IMR-90 (cell line): ENCODE measurements at regions of chr20 and their contacts with region 1.

Region 1: DNA sequence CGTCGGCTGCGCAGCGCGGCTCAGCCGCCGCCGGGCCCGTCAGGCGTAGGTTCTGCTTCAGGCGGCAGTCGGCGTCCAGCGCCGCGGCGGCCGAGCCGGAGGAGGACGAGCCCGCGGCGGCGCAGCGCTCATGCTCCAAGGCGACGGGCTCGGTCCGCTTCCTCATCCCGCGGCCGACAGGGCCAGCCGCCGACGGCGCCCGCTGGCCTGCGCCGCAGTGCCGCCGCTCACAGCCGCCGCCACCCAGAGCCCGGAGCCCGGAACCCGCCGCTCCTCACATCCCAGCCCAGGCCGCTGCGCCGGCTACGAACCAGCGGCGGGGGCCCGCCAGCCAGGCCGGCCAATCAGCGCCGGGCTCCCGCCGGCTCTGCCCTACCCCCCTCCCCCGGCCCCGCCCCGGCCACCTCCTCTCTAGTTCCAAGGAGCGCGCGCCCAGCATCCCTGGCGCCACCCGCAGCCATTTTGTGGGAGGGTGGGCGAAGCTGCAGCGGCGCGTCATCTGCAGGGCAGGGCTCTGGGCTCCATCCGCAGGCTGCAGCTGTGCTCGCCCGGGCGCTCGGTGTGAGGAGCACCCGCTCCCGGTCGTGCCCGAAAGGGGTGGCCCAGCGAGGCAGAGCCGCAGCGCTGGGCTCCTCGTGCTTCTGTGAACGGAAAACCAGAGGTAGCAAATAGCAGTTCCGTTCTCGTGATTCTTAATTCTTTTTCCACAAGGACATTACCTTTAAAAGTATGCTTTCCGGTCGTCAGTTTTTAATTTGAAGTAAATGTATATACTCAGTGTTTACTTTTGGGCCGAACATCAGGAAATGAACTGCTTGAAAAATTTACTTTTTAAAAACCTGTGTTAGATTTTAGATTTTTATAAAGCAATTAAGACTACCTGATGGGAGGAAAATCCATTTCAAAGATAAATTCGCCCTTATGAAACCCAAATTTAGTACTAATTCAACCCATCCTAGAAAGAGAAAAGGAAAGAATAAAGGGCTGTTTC is at the start of gene ABHD12:
- DNase-seq: peak; percentile 95
- ATAC-seq: peak; percentile 96
- H3K4me3 ChIP-seq: peak within 1 kb of the TSS; percentile 98
- H3K27ac ChIP-seq: peak within 1 kb of the TSS; percentile 96
- H3K4me1 ChIP-seq: no peaks in the 10 kb centered on the region; the same call in 1 of the 2 replicates
- H3K27me3 ChIP-seq: no peaks in the 10 kb centered on the region
- CTCF ChIP-seq: no peak
- POLR2A ChIP-seq: peak; percentile 96
- RAD21 ChIP-seq: peak; percentile 25
- total RNA-seq, gene ABHD12: 64.2 and 80.7 TPM in 2 replicates

Region 2: GRCh38 chr20:24634855-24635254 is 756.0 kb before region 1 on chr20:
- CTCF ChIA-PET with region 1: no interaction called
- POLR2A ChIA-PET with region 1: no interaction called
- dilution Hi-C with region 1: no loop called
- in situ Hi-C with region 1: loop called (anchors 25 kb)
- intact Hi-C with region 1: no loop called
- DNase-seq: peak; percentile 94
- ATAC-seq: peak; percentile 97
- H3K4me3 ChIP-seq: no peak overlapping the region
- H3K27ac ChIP-seq: peak overlapping the region; percentile 66
- H3K4me1 ChIP-seq: peaks cover 9% of the 10 kb centered on the region
- H3K27me3 ChIP-seq: peaks cover 7% of the 10 kb centered on the region
- CTCF ChIP-seq: no peak
- POLR2A ChIP-seq: no peak
- RAD21 ChIP-seq: peak; percentile 30; the same call in 1 of the 2 replicates

Region 3: DNA sequence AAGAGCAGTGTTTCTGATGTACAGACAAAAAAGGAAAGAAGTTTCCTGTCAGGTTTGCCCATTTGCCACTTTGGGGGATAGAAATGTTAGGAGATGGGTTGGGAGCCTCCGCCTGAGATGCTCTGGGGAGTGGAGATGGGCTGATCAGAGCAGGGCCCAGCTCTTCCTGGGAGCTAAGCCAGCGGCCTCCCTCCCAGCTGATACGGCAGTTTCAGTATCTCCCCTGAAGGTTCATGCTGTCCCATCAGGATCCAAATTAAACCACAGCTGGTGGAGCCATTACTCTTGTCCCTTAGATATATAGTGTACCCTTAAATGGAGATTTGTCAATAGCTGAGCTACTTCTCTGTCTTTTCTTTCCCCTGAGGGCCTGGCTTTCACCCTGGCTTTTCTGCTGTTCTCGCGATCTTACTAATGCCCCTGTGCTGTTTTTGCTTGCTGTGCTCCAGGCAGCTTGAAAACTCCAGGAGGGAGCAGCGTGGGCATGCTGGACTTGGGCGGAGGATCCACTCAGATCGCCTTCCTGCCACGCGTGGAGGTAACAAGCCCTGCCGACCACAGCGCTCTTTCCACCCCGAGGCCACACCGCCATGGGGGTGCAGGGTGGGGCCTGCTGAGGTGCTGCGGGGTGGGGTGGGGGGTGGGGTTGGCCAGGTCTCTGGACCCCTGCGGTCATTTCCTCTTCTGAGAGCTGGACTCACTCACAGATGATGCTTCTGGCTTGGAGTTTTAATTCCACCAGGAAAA is 174.5 kb before region 1 on chr20:
- CTCF ChIA-PET with region 1: interaction called, 4 read pairs
- POLR2A ChIA-PET with region 1: no interaction called
- dilution Hi-C with region 1: no loop called
- in situ Hi-C with region 1: loop called (anchors 10 kb)
- intact Hi-C with region 1: no loop called
- DNase-seq: no peak
- ATAC-seq: no peak
- H3K4me3 ChIP-seq: no peak overlapping the region
- H3K27ac ChIP-seq: no peak overlapping the region
- H3K4me1 ChIP-seq: no peaks in the 10 kb centered on the region
- H3K27me3 ChIP-seq: no peaks in the 10 kb centered on the region
- CTCF ChIP-seq: no peak
- POLR2A ChIP-seq: no peak
- RAD21 ChIP-seq: no peak

Region 4: DNA sequence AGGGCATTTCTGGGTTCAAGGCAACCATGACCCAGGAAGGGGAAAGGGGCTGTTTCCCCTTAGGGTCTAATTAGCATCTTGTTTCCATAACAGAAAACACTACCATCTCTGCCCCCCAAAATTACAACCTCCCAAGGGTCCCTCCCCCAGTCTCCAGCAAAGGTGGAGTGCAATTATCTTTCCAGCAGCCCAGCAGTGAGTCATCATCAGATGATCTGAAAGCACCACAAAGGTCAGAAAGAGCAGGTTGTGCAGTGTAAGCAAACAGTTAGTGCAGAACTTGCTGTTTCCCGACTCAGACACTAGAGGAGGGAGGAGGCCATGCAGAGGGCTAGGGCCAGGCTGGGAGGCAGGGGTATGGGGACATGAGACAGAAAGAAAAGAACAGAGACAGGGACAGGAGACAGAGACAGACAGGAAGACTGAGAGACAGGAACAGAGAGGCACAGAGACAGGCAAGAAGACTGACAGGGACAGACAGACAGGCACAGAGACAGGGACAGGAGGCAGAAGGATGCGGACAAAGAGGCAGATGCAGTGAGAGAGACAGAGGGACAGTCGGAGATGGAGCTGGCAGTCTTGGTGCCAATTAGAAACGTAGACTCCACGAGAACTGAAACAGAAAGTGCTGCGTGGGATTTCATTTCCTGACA is 80.4 kb before region 1 on chr20:
- CTCF ChIA-PET with region 1: no interaction called
- POLR2A ChIA-PET with region 1: no interaction called
- dilution Hi-C with region 1: no loop called
- in situ Hi-C with region 1: no loop called
- intact Hi-C with region 1: loop called (anchors 2 kb)
- DNase-seq: peak; percentile 96
- ATAC-seq: peak; percentile 90
- H3K4me3 ChIP-seq: peak overlapping the region; percentile 27; the same call in 1 of the 2 replicates
- H3K27ac ChIP-seq: peak overlapping the region; percentile 94
- H3K4me1 ChIP-seq: peaks cover 28% of the 10 kb centered on the region
- H3K27me3 ChIP-seq: no peaks in the 10 kb centered on the region
- CTCF ChIP-seq: peak; percentile 77
- POLR2A ChIP-seq: peak; percentile 76; the same call in 1 of the 2 replicates
- RAD21 ChIP-seq: peak; percentile 78